HCT116 (cell line): ENCODE measurements at regions of chr2 and their contacts with region 1.

Region 1: DNA sequence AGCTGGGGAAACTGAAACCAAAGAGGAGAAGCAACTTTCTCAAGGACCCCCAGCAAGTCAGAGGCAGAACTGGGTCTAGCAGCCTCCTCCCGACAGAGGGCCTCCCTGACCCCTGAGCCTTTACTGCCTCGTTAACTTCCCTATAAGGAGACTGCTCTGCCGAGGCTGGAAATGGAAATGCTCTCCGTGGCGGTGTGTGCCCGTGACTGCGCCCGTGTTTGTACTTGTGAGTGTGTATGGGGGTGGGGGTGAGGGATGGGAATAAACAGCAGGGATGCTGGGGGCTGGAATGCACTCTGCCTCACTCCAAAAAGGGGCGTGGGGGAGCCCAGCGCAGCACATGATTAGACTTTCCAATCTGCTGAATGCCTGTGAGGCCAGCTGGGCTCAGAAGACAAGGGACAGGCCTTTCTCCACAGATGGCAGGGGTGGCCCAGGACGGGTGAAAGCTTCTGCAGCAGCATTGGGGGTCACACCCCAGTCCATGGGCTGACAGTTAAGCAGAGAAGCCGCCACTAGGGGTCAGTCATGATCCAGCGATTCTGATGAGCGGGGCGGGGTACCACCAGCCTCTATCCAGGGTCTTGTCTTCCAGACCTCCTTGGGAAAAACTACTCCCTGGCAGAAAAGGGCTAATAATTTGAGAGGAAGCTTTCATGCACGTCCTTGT is 26.8 kb downstream of the MPHOSPH10 start:
- DNase-seq: peak; percentile 19
- ATAC-seq: peak; percentile 91
- H3K4me3 ChIP-seq: no peak overlapping the region
- H3K27ac ChIP-seq: no peak overlapping the region
- H3K4me1 ChIP-seq: no peaks in the 10 kb centered on the region
- H3K27me3 ChIP-seq: no peaks in the 10 kb centered on the region
- CTCF ChIP-seq: peak; percentile 52 to 79 (median 78); a peak in 5 of 6 replicates
- POLR2A ChIP-seq: no peak
- RAD21 ChIP-seq: peak; percentile 80

Region 2: GRCh38 chr2:71100195-71100964 is 56.9 kb before region 1 on chr2:
- CTCF ChIA-PET with region 1: interaction called, 17 read pairs
- POLR2A ChIA-PET with region 1: no interaction called
- RAD21 ChIA-PET with region 1: interaction called in 1 of 2 experiments, 6 read pairs
- intact Hi-C with region 1: no loop called
- DNase-seq: peak; percentile 51
- ATAC-seq: peak; percentile 99
- H3K4me3 ChIP-seq: no peak overlapping the region
- H3K27ac ChIP-seq: no peak overlapping the region
- H3K4me1 ChIP-seq: peaks cover 0 to 2% of the 10 kb centered on the region in 2 experiments; a peak in 1 of 4 replicates
- H3K27me3 ChIP-seq: no peaks in the 10 kb centered on the region
- CTCF ChIP-seq: peak; percentile 59 to 81 (median 68); a peak in 5 of 6 replicates
- POLR2A ChIP-seq: no peak
- RAD21 ChIP-seq: peak; percentile 66

Region 3: DNA sequence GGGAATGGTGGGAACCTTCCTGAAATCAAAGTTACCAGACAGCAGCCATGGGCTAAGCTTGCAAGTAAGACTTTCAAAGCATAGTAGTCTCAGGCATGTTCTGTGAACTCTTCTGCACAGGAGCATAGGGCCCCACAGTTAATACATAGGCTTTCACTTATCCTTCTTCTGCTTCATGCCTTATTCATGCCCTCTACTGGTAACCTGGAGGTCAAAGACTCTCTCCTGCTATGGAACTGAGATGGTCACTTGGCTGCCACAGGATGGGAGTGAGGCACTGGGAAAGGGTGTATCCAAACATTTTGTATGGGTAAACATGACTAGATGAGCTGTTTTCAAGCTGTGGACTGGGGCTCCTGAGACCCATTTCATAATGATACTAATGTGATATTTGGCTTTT is 125.2 kb after region 1 on chr2:
- CTCF ChIA-PET with region 1: interaction called, 4 read pairs
- POLR2A ChIA-PET with region 1: no interaction called
- RAD21 ChIA-PET with region 1: no interaction called
- intact Hi-C with region 1: loop called (anchors 2 kb)
- DNase-seq: no peak
- ATAC-seq: peak; percentile 79
- H3K4me3 ChIP-seq: no peak overlapping the region
- H3K27ac ChIP-seq: no peak overlapping the region
- H3K4me1 ChIP-seq: peaks cover 6 to 12% of the 10 kb centered on the region in 2 experiments; a peak in 3 of 4 replicates
- H3K27me3 ChIP-seq: no peaks in the 10 kb centered on the region
- CTCF ChIP-seq: peak in 2 of 3 experiments; percentile 19 to 29; a peak in 2 of 6 replicates
- POLR2A ChIP-seq: no peak
- RAD21 ChIP-seq: peak; percentile 48

Region 4: DNA sequence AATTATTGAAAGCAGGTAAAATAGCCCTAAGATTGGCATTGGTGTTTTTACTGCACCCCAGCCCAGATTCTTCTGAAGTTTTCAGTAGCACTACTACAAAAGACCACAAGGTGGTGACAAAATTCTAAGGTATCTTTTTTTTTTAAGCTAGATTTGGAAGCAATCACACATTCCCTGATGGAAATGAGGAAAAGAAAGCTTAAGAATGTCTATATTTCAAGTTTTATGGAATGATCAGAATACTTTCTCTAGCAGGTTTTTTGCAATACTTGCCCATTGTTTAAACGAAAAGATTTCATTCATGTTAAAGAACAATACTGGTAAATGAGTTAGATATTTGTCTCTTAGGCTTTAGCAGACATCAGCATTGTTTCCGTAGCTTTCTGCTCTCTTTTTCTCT is 142.2 kb after region 1 on chr2:
- CTCF ChIA-PET with region 1: interaction called, 16 read pairs
- POLR2A ChIA-PET with region 1: no interaction called
- RAD21 ChIA-PET with region 1: no interaction called
- intact Hi-C with region 1: no loop called
- DNase-seq: no peak
- ATAC-seq: no peak; the same call in 1 of the 2 replicates
- H3K4me3 ChIP-seq: no peak overlapping the region
- H3K27ac ChIP-seq: no peak overlapping the region
- H3K4me1 ChIP-seq: no peaks in the 10 kb centered on the region
- H3K27me3 ChIP-seq: no peaks in the 10 kb centered on the region
- CTCF ChIP-seq: peak; percentile 58 to 77 (median 64); a peak in 5 of 6 replicates
- POLR2A ChIP-seq: no peak
- RAD21 ChIP-seq: peak; percentile 75